OCI-LY7 (cell line): ENCODE measurements at regions of chr13 and their contacts with region 1.

Region 1: DNA sequence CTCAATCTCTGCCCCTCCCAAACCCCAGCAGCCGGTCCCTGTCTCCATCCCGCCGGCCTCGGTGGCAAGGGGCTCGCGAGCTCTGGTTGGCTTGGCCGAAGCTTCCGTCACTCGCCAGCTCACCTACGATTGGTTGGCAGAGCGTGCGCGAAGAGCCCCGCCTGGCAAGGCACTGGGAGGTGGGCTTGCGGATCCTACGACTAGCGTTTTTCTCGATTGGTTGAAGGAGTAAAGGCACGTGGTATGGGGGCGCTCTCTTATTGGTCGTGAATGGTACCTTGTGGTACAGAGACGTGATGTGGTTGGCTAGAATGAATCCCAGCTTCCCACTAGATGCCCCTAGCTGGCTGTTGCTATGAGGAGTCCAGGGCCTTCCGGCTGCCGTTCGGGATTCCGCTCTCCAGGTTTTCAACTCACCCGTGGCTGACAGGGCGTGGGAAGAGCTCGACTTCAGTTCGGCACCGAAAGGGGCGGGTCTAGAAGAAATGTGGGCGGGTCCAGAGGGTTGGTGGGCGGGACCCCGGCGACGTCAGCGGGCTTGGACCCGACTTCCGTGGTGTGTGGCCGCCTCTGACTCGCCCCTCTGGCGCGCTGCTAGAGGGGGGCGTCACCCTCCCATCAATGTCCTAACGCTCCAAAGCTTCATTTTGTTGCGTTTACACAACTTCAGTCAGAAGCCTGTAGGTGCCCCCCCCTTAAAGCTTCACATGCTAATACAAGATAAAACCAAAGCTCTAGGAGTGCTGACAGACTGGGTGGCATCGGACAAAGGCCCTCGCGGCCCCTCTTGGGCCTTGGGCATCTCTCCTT is 847 bp upstream of the RAP2A start:
- DNase-seq: peak; percentile 95
- H3K4me3 ChIP-seq: peak overlapping the region; percentile 85
- H3K27ac ChIP-seq: peak overlapping the region; percentile 91
- H3K4me1 ChIP-seq: peaks cover 20% of the 10 kb centered on the region
- CTCF ChIP-seq: no peak

Region 2: GRCh38 chr13:97221989-97222700 is 211.0 kb before region 1 on chr13 and contains the start of gene MBNL2:
- CTCF ChIA-PET with region 1: no interaction called
- POLR2A ChIA-PET with region 1: interaction called, 5 read pairs
- intact Hi-C with region 1: loop called (anchors 2 kb)
- DNase-seq: peak; percentile 74
- H3K4me3 ChIP-seq: peak within 1 kb of the TSS; percentile 89
- H3K27ac ChIP-seq: peak within 1 kb of the TSS; percentile 65
- H3K4me1 ChIP-seq: peaks cover 31% of the 10 kb centered on the region
- CTCF ChIP-seq: no peak
- total RNA-seq, gene MBNL2: 1.6 and 2.7 TPM in 2 replicates

Region 3: GRCh38 chr13:97521726-97522125 is 88.6 kb after region 1 on chr13:
- CTCF ChIA-PET with region 1: no interaction called
- POLR2A ChIA-PET with region 1: no interaction called
- intact Hi-C with region 1: no loop called
- DNase-seq: no peak
- H3K4me3 ChIP-seq: no peak overlapping the region
- H3K27ac ChIP-seq: no peak overlapping the region
- H3K4me1 ChIP-seq: no peaks in the 10 kb centered on the region
- CTCF ChIP-seq: no peak

Region 4: DNA sequence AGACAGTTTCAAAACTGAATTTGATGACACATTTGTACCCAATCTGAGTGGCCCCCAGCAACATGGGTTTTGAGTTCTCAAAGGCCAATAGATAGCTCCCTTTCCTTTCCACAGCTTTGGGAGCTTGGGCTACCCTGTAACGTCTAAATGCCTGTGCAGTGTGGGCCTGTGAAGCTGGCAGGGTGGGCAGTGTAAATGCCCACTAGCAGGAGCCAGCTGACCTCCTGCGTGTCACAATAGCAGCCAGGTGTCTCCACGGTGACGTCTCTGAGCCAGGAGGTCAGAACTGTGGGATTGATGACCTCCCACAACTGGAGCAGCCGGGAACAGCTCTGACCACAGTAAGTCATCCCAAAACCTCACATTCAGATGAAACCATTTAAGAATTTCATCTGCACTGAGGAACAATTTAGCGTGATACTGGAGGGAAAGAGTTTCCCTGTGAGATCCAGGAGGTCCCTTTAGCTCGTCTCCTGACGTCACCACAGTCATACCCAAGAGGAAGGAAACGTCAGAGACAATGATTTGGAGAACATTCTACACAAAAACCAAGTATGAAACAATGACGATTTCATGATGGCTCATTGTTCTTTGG is 520.4 kb after region 1 on chr13 and contains the start of gene IPO5:
- CTCF ChIA-PET with region 1: no interaction called
- POLR2A ChIA-PET with region 1: no interaction called
- intact Hi-C with region 1: loop called (anchors 10 kb)
- DNase-seq: peak; percentile 7
- H3K4me3 ChIP-seq: no peak within 1 kb of the TSS
- H3K27ac ChIP-seq: peak within 1 kb of the TSS; percentile 59
- H3K4me1 ChIP-seq: peaks cover 45% of the 10 kb centered on the region
- CTCF ChIP-seq: no peak
- total RNA-seq, gene IPO5: 68.5 and 81.8 TPM in 2 replicates

Region 5: GRCh38 chr13:98345536-98345935 is 912.4 kb after region 1 on chr13:
- CTCF ChIA-PET with region 1: no interaction called
- POLR2A ChIA-PET with region 1: no interaction called
- intact Hi-C with region 1: no loop called
- DNase-seq: no peak
- H3K4me3 ChIP-seq: no peak overlapping the region
- H3K27ac ChIP-seq: no peak overlapping the region
- H3K4me1 ChIP-seq: no peaks in the 10 kb centered on the region
- CTCF ChIP-seq: no peak

Region 6: GRCh38 chr13:98576963-98577822 is 1144.1 kb after region 1 on chr13 and contains the start of gene STK24:
- CTCF ChIA-PET with region 1: no interaction called
- POLR2A ChIA-PET with region 1: no interaction called
- intact Hi-C with region 1: loop called (anchors 10 kb)
- DNase-seq: peak; percentile 68
- H3K4me3 ChIP-seq: peak within 1 kb of the TSS; percentile 96
- H3K27ac ChIP-seq: peak within 1 kb of the TSS; percentile 99
- H3K4me1 ChIP-seq: peaks cover 30% of the 10 kb centered on the region
- CTCF ChIP-seq: no peak
- total RNA-seq, gene STK24: 51.1 and 60.4 TPM in 2 replicates